ENCODE measurements at regions of chr19 and their contacts with region 1.

Region 1: DNA sequence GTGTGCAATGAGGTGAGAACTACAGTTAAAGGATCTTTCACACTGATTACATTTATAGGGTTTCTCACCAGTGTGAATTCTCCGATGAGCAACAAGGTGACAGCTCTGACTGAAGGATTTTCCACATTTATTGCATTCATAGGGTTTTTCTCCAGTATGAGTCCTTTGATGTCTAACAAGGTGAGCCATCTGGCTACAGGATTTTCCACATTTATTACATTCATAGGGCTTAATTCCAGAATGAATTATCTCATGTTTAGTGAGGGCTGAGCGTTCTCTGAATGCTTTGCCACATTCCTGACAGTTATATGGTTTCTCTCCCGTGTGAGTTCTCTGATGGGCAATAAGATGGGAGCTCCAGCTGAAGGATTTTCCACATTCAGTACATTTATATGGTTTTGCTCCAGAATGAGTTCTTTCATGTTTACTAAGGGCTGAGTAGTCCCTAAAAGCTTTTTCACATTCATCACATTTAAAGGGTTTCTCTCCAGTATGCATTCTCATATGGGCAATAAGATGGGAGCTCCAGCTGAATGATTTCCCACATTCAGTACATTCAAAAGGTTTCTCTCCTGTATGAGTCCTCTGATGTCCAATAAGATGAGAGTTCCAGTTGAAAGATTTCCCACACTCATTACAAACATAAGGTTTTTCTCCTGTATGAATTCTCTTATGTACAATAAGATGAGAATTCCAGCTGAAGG is 4.4 kb upstream of the C19orf18 start:
- DNase-seq: no peak
- H3K4me3 ChIP-seq: no peak overlapping the region
- H3K27ac ChIP-seq: no peak overlapping the region
- H3K4me1 ChIP-seq: no peaks in the 10 kb centered on the region
- H3K27me3 ChIP-seq: no peaks in the 10 kb centered on the region
- CTCF ChIP-seq: no peak
- POLR2A ChIP-seq: no peak

Region 2: GRCh38 chr19:57477191-57478008 is 501.3 kb before region 1 on chr19 and contains the start of gene ZNF772:
- intact Hi-C with region 1: loop called (anchors 10 kb)
- DNase-seq: peak; percentile 92 to 94
- H3K4me3 ChIP-seq: peak within 1 kb of the TSS; percentile 24 to 80 (median 41)
- H3K27ac ChIP-seq: peak within 1 kb of the TSS; percentile 20 to 70 (median 53)
- H3K4me1 ChIP-seq: peaks cover 9 to 11% of the 10 kb centered on the region in 2 donors
- H3K27me3 ChIP-seq: no peaks in the 10 kb centered on the region
- CTCF ChIP-seq: peak in 5 of 6 experiments; percentile 25 to 70 (median 52)
- POLR2A ChIP-seq: peak in 1 of 2 donors; percentile 33
- total RNA-seq, gene ZNF772: 30.9 to 46.2 (median 41.0) TPM

Region 3: DNA sequence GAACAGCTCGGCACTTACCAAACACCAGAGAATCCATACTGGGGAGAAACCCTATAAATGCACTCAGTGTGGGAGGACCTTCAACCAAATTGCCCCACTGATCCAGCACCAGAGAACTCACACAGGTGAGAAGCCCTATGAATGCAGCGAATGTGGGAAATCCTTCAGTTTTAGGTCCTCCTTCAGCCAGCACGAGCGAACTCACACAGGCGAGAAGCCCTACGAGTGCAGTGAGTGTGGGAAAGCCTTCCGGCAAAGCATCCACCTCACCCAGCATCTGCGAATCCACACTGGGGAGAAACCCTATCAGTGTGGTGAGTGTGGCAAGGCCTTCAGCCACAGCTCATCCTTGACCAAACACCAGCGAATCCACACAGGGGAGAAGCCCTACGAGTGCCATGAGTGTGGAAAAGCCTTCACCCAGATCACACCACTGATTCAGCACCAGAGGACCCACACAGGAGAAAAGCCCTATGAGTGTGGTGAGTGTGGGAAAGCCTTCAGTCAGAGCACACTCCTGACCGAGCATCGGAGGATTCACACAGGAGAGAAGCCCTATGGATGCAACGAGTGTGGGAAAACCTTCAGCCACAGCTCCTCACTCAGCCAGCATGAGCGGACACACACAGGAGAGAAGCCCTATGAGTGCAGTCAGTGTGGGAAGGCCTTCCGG is 88.6 kb after region 1 on chr19:
- intact Hi-C with region 1: no loop called
- DNase-seq: no peak
- H3K4me3 ChIP-seq: no peak overlapping the region
- H3K27ac ChIP-seq: no peak overlapping the region
- H3K4me1 ChIP-seq: no peaks in the 10 kb centered on the region
- H3K27me3 ChIP-seq: no peaks in the 10 kb centered on the region
- CTCF ChIP-seq: no peak
- POLR2A ChIP-seq: no peak

Region 4: GRCh38 chr19:58128041-58128685 is 149.4 kb after region 1 on chr19:
- intact Hi-C with region 1: loop called (anchors 5 kb)
- DNase-seq: no peak
- H3K4me3 ChIP-seq: no peak overlapping the region
- H3K27ac ChIP-seq: no peak overlapping the region
- H3K4me1 ChIP-seq: no peaks in the 10 kb centered on the region
- H3K27me3 ChIP-seq: no peaks in the 10 kb centered on the region
- CTCF ChIP-seq: no peak
- POLR2A ChIP-seq: no peak

Region 5: GRCh38 chr19:58196901-58197616 is 218.3 kb after region 1 on chr19:
- intact Hi-C with region 1: loop called (anchors 5 kb)
- DNase-seq: no peak
- H3K4me3 ChIP-seq: no peak overlapping the region
- H3K27ac ChIP-seq: no peak overlapping the region
- H3K4me1 ChIP-seq: no peaks in the 10 kb centered on the region
- H3K27me3 ChIP-seq: no peaks in the 10 kb centered on the region
- CTCF ChIP-seq: no peak
- POLR2A ChIP-seq: no peak

Region 6: DNA sequence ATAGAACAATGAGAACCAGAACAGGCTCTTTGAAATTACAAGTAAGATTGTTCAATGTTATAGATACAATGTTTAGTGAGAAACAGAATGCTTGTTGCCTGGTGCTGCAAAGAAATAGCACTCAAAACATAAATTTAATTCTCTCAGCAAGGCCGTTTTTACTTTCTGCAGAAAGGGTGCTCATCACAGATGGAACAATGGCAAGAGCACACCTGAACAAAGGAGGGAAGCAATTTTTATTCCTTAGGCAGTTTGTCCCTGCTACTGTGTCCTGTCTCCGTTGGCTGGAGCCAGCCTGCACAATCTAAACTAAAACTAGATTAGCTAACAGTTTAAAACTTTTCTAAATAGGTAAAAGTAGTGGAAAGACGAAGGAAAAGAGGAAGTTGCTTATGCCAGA is 289.6 kb after region 1 on chr19:
- intact Hi-C with region 1: loop called (anchors 5 kb)
- DNase-seq: no peak
- H3K4me3 ChIP-seq: no peak overlapping the region
- H3K27ac ChIP-seq: no peak overlapping the region
- H3K4me1 ChIP-seq: no peaks in the 10 kb centered on the region
- H3K27me3 ChIP-seq: no peaks in the 10 kb centered on the region
- CTCF ChIP-seq: no peak
- POLR2A ChIP-seq: no peak